ENCODE measurements at regions of chr12 and their contacts with region 1.

Region 1: DNA sequence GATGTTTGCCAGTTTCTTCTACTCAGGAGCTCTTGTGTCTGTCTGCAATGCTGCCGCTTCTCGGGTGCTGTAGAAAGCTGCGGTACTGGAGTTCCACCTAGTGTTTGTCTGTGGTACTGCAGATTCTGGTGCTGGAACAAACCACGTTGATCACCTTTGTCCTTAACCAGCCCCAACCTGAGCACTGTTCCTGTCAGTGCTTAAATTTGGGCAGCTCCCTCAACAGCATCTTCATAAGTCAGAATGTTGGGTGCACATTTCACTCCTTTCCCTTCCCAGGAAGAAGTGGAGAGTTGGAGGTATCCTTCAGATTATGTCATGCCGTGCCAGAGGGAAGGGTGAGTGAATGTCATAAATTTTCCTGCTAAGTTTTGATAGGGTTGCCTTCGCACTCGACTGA is 48.7 kb upstream of the LALBA start:
- DNase-seq: peak; percentile 63 to 69
- H3K4me3 ChIP-seq: no peak overlapping the region
- H3K27ac ChIP-seq: no peak overlapping the region
- H3K4me1 ChIP-seq: no peaks in the 10 kb centered on the region
- H3K27me3 ChIP-seq: peaks cover 27% of the 10 kb centered on the region
- CTCF ChIP-seq: peak; percentile 97

Region 2: DNA sequence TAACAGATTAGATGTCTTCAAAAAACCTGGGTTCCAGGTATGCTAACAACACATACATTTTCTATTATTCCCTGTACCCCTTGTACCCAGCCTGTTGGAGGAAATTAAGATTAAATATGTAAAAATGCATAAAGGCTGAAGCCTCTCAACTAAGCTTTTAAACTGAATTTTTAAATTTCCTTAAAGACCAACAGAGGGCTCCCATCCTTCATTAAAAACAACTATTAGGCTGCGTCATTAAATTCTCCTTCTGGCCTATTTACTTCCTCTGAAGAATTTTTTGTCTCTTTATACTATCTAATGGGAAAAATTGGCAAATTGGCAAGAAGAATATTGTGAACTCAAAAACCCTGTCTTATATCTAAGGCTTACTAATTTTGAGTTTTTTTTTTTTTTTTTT is 534.5 kb before region 1 on chr12:
- CTCF ChIA-PET with region 1: no interaction called
- POLR2A ChIA-PET with region 1: no interaction called
- intact Hi-C with region 1: loop called (anchors 5 kb)
- DNase-seq: no peak
- H3K4me3 ChIP-seq: no peak overlapping the region
- H3K27ac ChIP-seq: no peak overlapping the region
- H3K4me1 ChIP-seq: peaks cover 6% of the 10 kb centered on the region
- H3K27me3 ChIP-seq: no peaks in the 10 kb centered on the region
- CTCF ChIP-seq: peak; percentile 46; the same call in 1 of the 2 replicates

Region 3: GRCh38 chr12:48157018-48157888 is 461.3 kb before region 1 on chr12 and contains the start of gene ASB8:
- CTCF ChIA-PET with region 1: interaction called, 3 read pairs
- POLR2A ChIA-PET with region 1: no interaction called
- intact Hi-C with region 1: loop called (anchors 1 kb)
- DNase-seq: peak; percentile 93 to 97
- H3K4me3 ChIP-seq: peak within 1 kb of the TSS; percentile 90
- H3K27ac ChIP-seq: no peak within 1 kb of the TSS; the same call in 1 of the 2 replicates
- H3K4me1 ChIP-seq: peaks cover 7% of the 10 kb centered on the region; the same call in 1 of the 2 replicates
- H3K27me3 ChIP-seq: no peaks in the 10 kb centered on the region
- CTCF ChIP-seq: peak; percentile 52
- total RNA-seq, gene ASB8: 21.8 and 25.1 TPM in 2 replicates

Region 4: GRCh38 chr12:48183091-48183875 is 435.3 kb before region 1 on chr12 and contains the start of gene CCDC184:
- CTCF ChIA-PET with region 1: no interaction called
- POLR2A ChIA-PET with region 1: no interaction called
- intact Hi-C with region 1: loop called (anchors 10 kb)
- DNase-seq: no peak
- H3K4me3 ChIP-seq: no peak within 1 kb of the TSS
- H3K27ac ChIP-seq: no peak within 1 kb of the TSS
- H3K4me1 ChIP-seq: no peaks in the 10 kb centered on the region
- H3K27me3 ChIP-seq: peaks cover 16% of the 10 kb centered on the region
- CTCF ChIP-seq: no peak
- total RNA-seq, gene CCDC184: not detected in 2 replicates

Region 5: DNA sequence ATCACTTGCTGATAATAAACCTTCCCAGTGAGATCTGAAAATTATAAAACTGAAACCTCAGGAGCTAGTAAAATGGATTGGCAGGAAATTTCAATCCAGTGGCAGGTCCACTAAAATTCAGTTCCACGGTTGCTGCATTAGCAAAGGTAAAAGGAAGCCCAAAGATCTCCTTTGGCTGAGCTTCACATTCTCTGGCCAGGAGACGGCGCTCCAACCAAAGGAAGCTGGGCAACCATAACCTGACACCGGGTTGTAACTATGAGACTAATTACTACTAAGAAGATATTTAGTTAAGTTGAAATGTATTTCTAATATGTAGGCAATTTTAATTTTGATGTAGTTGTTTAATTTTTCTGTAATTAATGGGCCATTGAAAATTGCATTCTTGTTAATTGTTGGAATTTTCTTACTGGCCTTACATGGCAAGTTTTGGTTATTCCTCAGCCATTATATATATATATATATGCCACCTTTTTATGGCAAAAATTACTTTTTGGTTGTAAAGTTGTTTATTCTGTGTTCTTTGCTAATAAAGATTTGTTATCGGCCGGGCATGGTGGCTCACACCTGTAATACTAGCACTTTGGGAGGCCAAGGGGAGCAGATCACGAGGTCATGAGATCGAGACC is 76.1 kb before region 1 on chr12:
- CTCF ChIA-PET with region 1: no interaction called
- POLR2A ChIA-PET with region 1: interaction called, 4 read pairs
- intact Hi-C with region 1: loop called (anchors 2 kb)
- DNase-seq: peak in 1 of 2 experiments; percentile 24
- H3K4me3 ChIP-seq: no peak overlapping the region
- H3K27ac ChIP-seq: no peak overlapping the region
- H3K4me1 ChIP-seq: peaks cover 17% of the 10 kb centered on the region; the same call in 1 of the 2 replicates
- H3K27me3 ChIP-seq: peaks cover 6% of the 10 kb centered on the region; the same call in 1 of the 2 replicates
- CTCF ChIP-seq: peak; percentile 57